ENCODE measurements at regions of chr19 and their contacts with region 1.

Region 1: GRCh38 chr19:46076951-46077816 is 36.4 kb upstream of the IGFL4 start:
- DNase-seq: no peak
- ATAC-seq: no peak
- H3K4me3 ChIP-seq: no peak overlapping the region
- H3K27ac ChIP-seq: no peak overlapping the region
- H3K4me1 ChIP-seq: no peaks in the 10 kb centered on the region
- H3K27me3 ChIP-seq: peaks cover 48 to 60% (median 48%) of the 10 kb centered on the region in 3 donors
- CTCF ChIP-seq: peak in 3 of 5 experiments; percentile 26 to 39 (median 33)
- POLR2A ChIP-seq: no peak

Region 2: DNA sequence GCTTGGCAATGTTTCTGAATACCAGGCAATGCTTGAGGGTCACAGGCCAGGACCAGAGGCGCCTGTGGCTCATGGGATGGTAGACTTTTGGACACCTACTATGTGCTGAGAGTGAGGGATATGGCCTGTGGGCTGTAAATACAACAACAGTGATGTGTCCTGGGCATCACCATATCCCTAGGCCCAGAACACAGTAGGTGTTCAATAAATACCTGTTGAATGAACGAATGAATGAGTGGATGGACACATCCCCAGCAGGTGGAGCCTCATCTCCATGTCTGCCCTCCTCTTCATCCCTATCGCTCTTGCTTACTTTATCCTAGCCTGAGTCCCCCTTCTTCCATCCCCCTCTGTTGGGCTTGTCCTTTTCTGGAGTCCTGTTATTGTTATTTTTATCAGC is 146.1 kb before region 1 on chr19:
- in situ Hi-C with region 1: no loop called
- intact Hi-C with region 1: no loop called
- DNase-seq: no peak
- ATAC-seq: no peak
- H3K4me3 ChIP-seq: no peak overlapping the region
- H3K27ac ChIP-seq: no peak overlapping the region
- H3K4me1 ChIP-seq: peaks cover 0 to 7% of the 10 kb centered on the region in 2 donors
- H3K27me3 ChIP-seq: peaks cover 17 to 26% (median 17%) of the 10 kb centered on the region in 3 donors
- CTCF ChIP-seq: peak in 2 of 5 experiments; percentile 12
- POLR2A ChIP-seq: no peak

Region 3: DNA sequence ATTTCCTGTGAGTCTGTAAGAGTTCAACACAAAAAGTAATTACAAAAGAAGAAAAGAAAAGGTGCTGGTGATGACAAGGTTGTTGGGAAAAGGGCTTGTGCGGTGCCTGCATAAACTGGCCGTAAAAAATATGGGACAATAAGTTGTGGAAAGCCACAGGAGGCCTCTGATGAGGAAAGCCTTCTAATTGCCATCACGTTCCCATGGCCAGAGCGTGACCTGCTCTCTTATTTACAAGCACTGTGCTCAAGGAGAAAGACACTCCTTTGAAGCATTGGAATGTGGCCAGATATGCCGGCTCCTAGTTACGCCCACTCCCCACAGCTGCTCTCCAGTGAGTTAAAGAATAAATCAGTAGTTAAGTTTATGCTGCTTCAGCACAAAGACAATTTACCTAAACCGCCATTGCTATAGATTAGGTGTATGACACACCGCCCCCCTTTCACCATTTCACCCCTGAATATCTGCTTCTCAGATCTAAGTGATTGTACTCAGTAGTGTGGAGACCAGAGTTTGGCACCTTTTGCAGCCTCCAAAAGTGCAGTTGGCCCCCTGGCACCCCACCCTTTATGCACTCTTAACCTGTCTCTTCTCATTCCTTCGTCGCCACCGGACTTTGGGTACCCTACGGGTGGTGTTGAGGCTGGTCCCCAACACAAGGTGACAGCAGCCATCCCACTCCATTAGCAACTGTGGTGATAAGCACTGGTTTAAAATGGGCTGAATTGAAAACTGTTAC is 46.2 kb before region 1 on chr19:
- in situ Hi-C with region 1: no loop called
- intact Hi-C with region 1: loop called (anchors 2 kb)
- DNase-seq: no peak
- ATAC-seq: no peak
- H3K4me3 ChIP-seq: no peak overlapping the region
- H3K27ac ChIP-seq: no peak overlapping the region
- H3K4me1 ChIP-seq: no peaks in the 10 kb centered on the region
- H3K27me3 ChIP-seq: peaks cover 0 to 19% (median 7%) of the 10 kb centered on the region in 3 donors
- CTCF ChIP-seq: no peak
- POLR2A ChIP-seq: no peak

Region 4: GRCh38 chr19:46181388-46181779 is 104.2 kb after region 1 on chr19:
- in situ Hi-C with region 1: loop called in 1 of 4 experiments (anchors 10 kb)
- intact Hi-C with region 1: no loop called
- DNase-seq: no peak
- ATAC-seq: no peak
- H3K4me3 ChIP-seq: no peak overlapping the region
- H3K27ac ChIP-seq: no peak overlapping the region
- H3K4me1 ChIP-seq: no peaks in the 10 kb centered on the region
- H3K27me3 ChIP-seq: peaks cover 0 to 6% (median 5%) of the 10 kb centered on the region in 3 donors
- CTCF ChIP-seq: no peak
- POLR2A ChIP-seq: no peak

Region 5: DNA sequence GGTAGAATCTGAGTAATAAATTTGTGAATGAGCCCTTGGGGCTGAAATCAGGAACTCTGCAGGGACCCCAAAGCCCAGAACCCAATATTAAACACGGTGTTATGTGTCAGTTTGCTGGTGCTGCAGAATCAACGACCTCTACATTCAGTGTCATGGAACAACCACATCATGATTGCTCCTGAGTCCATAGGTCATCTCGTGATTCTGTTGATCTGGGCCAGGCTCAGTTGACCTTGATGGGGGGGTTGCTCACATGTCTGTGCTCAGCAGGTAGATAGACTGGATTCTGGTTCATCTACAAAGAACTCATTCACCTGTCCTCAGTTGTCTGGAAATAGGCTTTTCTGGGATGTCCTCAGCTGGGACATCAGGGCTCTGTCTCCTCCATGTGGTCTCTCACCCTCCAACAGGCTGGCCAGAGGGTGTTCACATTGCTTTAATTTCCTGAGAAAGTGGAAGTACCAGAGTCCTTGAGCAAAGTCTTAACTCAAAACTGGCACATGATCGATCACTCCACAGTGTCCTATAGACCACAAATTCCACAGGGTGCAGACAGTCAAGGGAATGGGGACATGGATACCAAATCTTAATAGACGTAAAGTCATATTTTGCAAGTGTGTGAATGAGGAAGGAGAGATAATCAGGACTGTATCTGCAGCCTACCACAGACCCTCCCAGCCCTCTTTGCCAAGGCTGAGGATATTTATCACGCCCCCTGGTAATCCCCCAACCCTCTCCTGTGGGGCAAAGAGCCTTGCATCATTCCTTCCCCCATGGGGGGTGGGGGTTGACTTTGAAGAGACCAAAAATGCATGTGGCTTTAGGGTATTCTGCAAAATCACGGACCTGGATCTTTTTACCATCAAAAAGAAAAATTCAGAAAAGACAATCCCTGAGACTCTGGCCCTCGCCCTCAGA is 113.0 kb after region 1 on chr19:
- in situ Hi-C with region 1: loop called in 1 of 4 experiments (anchors 10 kb)
- intact Hi-C with region 1: loop called (anchors 1 kb)
- DNase-seq: no peak
- ATAC-seq: no peak
- H3K4me3 ChIP-seq: no peak overlapping the region
- H3K27ac ChIP-seq: no peak overlapping the region
- H3K4me1 ChIP-seq: peaks cover 0 to 12% of the 10 kb centered on the region in 2 donors
- H3K27me3 ChIP-seq: peaks cover 3 to 16% (median 16%) of the 10 kb centered on the region in 3 donors
- CTCF ChIP-seq: no peak
- POLR2A ChIP-seq: no peak

Region 6: DNA sequence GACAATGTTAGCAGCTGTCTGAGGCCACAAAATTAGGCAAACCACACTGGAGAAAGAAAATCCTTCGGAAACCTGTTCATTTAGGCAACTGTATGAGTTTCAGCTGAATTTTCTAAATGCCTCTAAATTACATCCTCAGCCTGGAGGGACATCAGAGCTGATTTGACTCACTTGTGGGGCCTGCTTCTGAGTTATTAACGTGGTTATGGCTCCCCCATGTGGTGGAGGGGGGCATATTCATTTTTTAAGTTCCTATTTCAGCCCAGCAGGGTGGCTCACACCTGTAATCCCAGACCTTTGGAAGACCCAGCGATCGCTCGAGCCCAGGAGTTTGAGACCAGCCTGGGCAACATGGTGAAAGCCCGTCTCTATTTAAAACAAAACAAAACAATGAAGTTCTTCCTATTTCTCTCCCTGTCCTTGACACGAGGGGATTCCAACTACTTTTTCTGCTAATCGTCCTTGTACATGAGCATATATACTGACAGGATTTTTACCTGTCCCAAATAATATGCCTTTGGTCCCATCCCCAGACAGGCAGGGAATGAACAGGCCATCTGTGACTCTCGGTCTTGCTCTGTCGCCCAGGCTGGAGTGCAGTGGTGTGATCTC is 188.1 kb after region 1 on chr19:
- in situ Hi-C with region 1: loop called (anchors 5 to 10 kb)
- intact Hi-C with region 1: loop called (anchors 1 kb)
- DNase-seq: peak; percentile 20 to 40
- ATAC-seq: peak; percentile 76 to 79
- H3K4me3 ChIP-seq: no peak overlapping the region
- H3K27ac ChIP-seq: no peak overlapping the region
- H3K4me1 ChIP-seq: no peaks in the 10 kb centered on the region
- H3K27me3 ChIP-seq: peaks cover 4 to 7% (median 6%) of the 10 kb centered on the region in 3 donors
- CTCF ChIP-seq: peak; percentile 74 to 84 (median 79)
- POLR2A ChIP-seq: no peak

Measured in gastrocnemius medialis (tissue), 4 donors.